CD4-positive, alpha-beta T cell (primary cell): ENCODE measurements at regions of chr22 and their contacts with region 1.

Region 1: GRCh38 chr22:20016734-20017621 is at the start of gene ARVCF:
- DNase-seq: peak; percentile 86 to 96 (median 90)
- ATAC-seq: peak; percentile 68
- H3K4me3 ChIP-seq: peak within 1 kb of the TSS; percentile 88
- H3K4me3 Mint-ChIP-seq: peak within 1 kb of the TSS; percentile 92
- H3K27ac ChIP-seq: no peak within 1 kb of the TSS
- H3K27ac Mint-ChIP-seq: peak within 1 kb of the TSS; percentile 73
- H3K4me1 ChIP-seq: peaks cover 35% of the 10 kb centered on the region
- H3K4me1 Mint-ChIP-seq: peaks cover 26% of the 10 kb centered on the region
- H3K27me3 ChIP-seq: peaks cover 0 to 3% of the 10 kb centered on the region in 2 experiments
- H3K27me3 Mint-ChIP-seq: peaks cover 4% of the 10 kb centered on the region
- CTCF ChIP-seq: peak; percentile 6
- total RNA-seq, gene ARVCF: 2.2 to 2.5 TPM

Region 2: DNA sequence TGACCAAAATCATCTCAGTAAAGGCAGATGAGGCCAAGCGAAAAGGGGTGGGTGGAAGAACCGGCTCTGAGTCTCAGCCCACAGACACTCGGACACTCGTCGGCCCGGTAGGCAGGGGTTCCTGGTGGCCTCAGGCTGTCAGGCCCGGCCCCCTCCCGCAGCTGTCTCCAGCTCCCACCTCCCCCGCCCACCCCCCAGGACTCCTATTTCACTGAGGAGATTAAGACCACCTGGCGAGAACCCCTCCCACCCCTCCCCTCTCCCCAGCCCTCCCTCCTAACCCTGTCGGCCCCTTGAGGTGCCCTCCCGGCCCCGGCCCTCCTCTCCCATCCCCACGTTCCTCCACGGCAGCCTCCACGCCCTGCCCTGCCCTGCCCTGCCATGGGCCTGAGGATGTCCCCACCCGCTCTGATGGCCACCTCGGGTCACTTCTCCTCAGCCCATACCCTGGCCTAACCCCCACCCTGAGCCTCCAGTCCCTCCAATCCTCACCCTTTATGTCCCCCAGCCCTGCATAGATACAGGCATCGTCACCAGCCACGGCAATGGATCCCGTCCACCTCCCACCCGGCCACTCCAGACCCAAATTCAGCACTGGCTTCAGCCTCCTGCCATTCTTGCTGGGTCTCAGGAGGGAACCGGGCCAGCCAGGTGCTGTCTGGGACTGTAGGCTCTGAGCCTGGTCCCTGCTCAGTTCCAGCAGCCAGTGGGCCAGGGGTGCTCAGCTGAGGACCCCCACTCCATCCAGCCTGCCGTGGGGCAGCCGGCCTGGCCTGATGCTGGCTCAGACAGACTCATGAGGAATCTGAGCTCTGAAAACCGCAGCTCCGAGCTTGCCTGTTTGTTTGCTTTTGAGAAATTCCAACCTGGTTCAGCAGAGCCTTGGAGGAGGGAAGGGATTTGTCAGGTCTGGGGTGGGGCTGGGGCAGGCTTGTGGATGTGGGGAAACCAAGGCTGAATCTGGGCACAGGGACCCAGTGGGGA is 266.2 kb before region 1 on chr22:
- CTCF ChIA-PET with region 1: no interaction called
- POLR2A ChIA-PET with region 1: no interaction called
- intact Hi-C with region 1: no loop called
- DNase-seq: no peak
- ATAC-seq: no peak
- H3K4me3 ChIP-seq: no peak overlapping the region
- H3K4me3 Mint-ChIP-seq: no peak overlapping the region
- H3K27ac ChIP-seq: no peak overlapping the region
- H3K27ac Mint-ChIP-seq: no peak overlapping the region
- H3K4me1 ChIP-seq: peaks cover 10% of the 10 kb centered on the region
- H3K4me1 Mint-ChIP-seq: peaks cover 3% of the 10 kb centered on the region
- H3K27me3 ChIP-seq: peaks cover 16 to 28% of the 10 kb centered on the region in 2 experiments
- H3K27me3 Mint-ChIP-seq: peaks cover 29% of the 10 kb centered on the region
- CTCF ChIP-seq: no peak

Region 3: GRCh38 chr22:19854778-19855503 is 162.0 kb before region 1 on chr22 and contains the starts of genes GNB1L and RTL10:
- CTCF ChIA-PET with region 1: no interaction called
- POLR2A ChIA-PET with region 1: no interaction called
- intact Hi-C with region 1: loop called in 1 of 2 experiments (anchors 10 kb)
- DNase-seq: peak; percentile 92 to 99 (median 96)
- ATAC-seq: peak; percentile 89
- H3K4me3 ChIP-seq: peak within 1 kb of the TSS; percentile 99
- H3K4me3 Mint-ChIP-seq: peak within 1 kb of the TSS; percentile 95
- H3K27ac ChIP-seq: peak within 1 kb of the TSS; percentile 78 to 90
- H3K27ac Mint-ChIP-seq: peak within 1 kb of the TSS; percentile 96
- H3K4me1 ChIP-seq: peaks cover 58% of the 10 kb centered on the region
- H3K4me1 Mint-ChIP-seq: peaks cover 71% of the 10 kb centered on the region
- H3K27me3 ChIP-seq: no peaks in the 10 kb centered on the region
- H3K27me3 Mint-ChIP-seq: no peaks in the 10 kb centered on the region
- CTCF ChIP-seq: no peak
- total RNA-seq, gene GNB1L: 3.0 to 6.5 TPM
- total RNA-seq, gene RTL10: 24.7 TPM

Region 4: DNA sequence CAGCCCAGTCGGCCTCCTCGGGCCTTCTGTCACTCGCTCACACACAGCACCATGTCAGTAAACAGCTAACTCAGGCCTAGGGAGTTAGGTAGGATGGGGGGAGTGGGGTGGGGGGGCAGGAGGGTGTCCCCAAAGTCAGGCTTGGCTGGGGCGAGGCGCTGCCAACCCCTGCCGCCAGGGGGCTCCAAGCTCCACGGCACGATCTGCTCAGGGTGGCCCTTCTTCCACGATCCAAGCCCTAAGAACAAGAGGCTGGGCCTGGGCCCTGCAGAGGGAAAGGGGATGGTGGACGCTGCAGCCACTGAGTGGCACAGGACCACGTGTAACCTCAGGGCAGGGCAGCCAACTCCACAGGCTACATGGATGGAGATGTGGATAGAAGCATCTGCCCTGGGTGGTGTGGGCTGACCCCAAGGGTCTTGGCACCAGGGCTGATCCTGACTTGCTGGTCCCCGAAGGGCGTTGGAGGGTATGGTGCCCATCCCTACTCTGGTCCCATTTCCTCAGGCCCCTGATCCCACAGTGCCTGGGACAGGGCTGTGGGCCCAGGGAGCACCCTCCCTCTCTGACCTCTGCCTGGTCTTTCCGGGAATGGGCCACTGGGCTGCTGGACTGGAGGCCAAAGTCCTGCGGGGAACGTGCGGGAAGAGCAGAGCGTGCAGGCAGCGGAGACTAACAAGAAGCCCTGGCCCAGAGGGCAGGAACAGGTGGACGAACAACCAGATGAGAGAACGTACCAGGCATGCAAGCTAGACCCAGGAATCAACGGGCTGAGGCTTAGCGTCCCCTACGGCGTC is 46.3 kb before region 1 on chr22:
- CTCF ChIA-PET with region 1: interaction called, 5 read pairs
- POLR2A ChIA-PET with region 1: interaction called, 4 read pairs
- intact Hi-C with region 1: loop called in 1 of 2 experiments (anchors 1 kb)
- DNase-seq: peak; percentile 59 to 85 (median 76)
- ATAC-seq: peak; percentile 87
- H3K4me3 ChIP-seq: no peak overlapping the region
- H3K4me3 Mint-ChIP-seq: no peak overlapping the region
- H3K27ac ChIP-seq: no peak overlapping the region
- H3K27ac Mint-ChIP-seq: no peak overlapping the region
- H3K4me1 ChIP-seq: peaks cover 18% of the 10 kb centered on the region
- H3K4me1 Mint-ChIP-seq: peaks cover 16% of the 10 kb centered on the region
- H3K27me3 ChIP-seq: no peaks in the 10 kb centered on the region
- H3K27me3 Mint-ChIP-seq: no peaks in the 10 kb centered on the region
- CTCF ChIP-seq: peak; percentile 90

Region 5: DNA sequence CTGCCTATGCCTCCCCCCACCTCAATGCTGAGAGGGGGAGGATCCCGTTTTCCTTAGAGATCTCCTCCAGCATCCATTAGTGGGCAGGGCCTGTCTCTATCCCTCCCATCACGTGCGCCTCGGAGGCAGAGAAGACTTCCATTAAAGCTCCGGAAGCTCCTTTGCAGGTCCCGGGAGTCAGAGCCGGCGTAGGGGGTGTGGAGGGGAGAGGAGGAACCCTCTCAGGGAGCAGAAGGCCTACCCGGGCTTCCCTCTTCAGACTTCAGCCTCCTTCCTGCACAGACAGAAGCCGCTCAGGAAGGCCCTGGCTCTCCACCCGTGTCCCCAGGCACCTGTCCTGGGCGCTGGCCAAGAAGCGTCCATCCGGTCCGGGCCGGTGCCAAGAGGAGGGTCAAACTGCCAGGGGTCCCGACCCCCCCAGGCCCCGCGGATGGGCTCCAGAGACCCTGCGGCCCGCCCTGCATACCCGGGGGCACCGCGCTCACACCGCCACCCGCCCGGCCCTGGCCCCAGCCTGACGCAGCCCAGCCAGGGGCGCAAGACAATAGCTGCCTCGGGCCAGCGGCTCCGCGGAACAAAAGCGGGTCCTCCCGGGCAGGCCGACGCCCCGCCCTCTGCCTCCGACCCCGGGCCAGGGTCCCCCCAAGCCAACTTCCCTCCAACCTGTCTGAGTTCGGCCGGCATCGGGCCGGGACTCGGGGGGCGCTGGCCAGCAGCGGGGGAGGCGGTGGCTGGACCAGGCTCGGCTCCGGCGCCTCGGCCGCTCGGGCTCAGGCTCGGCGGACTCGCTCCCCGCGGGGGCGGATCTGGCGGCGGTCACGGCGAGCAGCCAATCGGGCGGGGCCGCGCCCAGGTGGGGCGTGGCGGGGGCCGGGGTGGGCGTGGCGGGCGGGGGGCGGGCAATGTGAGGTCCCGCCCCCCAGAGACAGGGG is 30.3 kb before region 1 on chr22:
- CTCF ChIA-PET with region 1: no interaction called
- POLR2A ChIA-PET with region 1: interaction called, 3 read pairs
- intact Hi-C with region 1: loop called in 1 of 2 experiments (anchors 2 kb)
- DNase-seq: peak; percentile 31 to 82 (median 53)
- ATAC-seq: peak; percentile 81
- H3K4me3 ChIP-seq: peak overlapping the region; percentile 41
- H3K4me3 Mint-ChIP-seq: peak overlapping the region; percentile 68
- H3K27ac ChIP-seq: no peak overlapping the region
- H3K27ac Mint-ChIP-seq: no peak overlapping the region
- H3K4me1 ChIP-seq: peaks cover 15% of the 10 kb centered on the region
- H3K4me1 Mint-ChIP-seq: no peaks in the 10 kb centered on the region
- H3K27me3 ChIP-seq: peaks cover 0 to 2% of the 10 kb centered on the region in 2 experiments
- H3K27me3 Mint-ChIP-seq: no peaks in the 10 kb centered on the region
- CTCF ChIP-seq: no peak

Region 6: DNA sequence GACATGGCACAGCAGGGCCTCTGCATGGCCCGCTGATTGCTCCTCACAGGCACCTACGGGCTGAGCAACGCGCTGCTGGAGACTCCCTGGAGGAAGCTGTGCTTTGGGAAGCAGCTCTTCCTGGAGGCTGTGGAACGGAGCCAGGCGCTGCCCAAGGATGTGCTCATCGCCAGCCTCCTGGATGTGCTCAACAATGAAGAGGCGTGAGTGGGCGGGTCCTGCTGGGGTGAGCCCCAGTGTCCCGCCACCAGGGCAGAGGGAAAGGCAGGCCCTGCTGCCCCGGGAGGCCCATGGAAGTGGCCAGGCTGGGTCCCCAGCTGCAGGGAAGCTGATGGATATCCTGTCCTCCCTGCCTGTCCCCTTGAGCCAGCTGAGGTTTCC is 44.5 kb after region 1 on chr22:
- CTCF ChIA-PET with region 1: no interaction called
- POLR2A ChIA-PET with region 1: no interaction called
- intact Hi-C with region 1: no loop called
- DNase-seq: no peak
- ATAC-seq: no peak
- H3K4me3 ChIP-seq: no peak overlapping the region
- H3K4me3 Mint-ChIP-seq: no peak overlapping the region
- H3K27ac ChIP-seq: no peak overlapping the region
- H3K27ac Mint-ChIP-seq: no peak overlapping the region
- H3K4me1 ChIP-seq: no peaks in the 10 kb centered on the region
- H3K4me1 Mint-ChIP-seq: no peaks in the 10 kb centered on the region
- H3K27me3 ChIP-seq: no peaks in the 10 kb centered on the region
- H3K27me3 Mint-ChIP-seq: no peaks in the 10 kb centered on the region
- CTCF ChIP-seq: no peak

Region 7: DNA sequence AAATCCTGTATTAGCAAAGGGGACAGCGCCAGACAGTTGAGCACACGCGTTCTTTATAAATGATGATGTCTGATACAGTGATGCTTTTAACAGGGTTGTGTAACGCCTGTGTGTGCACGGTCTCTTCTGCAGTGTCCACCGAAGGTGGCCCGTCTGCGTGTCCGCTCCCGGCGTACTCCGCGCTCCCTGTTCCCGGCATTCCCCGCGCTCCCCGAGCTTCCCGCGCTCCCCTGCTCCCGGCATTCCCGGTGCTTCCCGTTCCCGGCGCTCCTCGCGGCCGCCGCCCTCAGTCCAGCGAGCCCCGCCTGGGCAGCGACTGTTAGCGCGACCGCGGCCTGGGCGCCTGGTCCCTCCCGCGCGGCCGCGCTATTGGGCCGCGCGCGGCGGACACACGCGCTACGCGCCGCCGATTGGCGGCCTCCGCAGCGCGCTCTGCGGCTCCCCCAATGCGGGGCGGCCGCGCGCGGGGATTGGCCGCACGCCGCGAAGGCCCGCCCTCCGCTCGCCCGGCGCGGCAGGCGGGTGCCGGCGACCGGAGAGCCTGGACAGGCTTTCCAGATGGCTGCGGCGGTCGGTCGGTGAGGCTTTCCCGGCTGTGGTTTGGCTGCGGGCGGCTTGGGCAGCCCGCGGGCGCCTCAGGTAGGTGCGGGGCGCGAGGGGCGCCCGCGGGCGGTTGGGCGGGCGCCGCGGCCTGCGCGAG is 62.9 kb after region 1 on chr22 and contains the start of gene DGCR8:
- CTCF ChIA-PET with region 1: no interaction called
- POLR2A ChIA-PET with region 1: interaction called, 3 read pairs
- intact Hi-C with region 1: loop called (anchors 1 kb)
- DNase-seq: peak; percentile 24 to 92 (median 62)
- ATAC-seq: peak; percentile 89
- H3K4me3 ChIP-seq: peak within 1 kb of the TSS; percentile 76
- H3K4me3 Mint-ChIP-seq: peak within 1 kb of the TSS; percentile 99
- H3K27ac ChIP-seq: peak within 1 kb of the TSS; percentile 52 to 53
- H3K27ac Mint-ChIP-seq: peak within 1 kb of the TSS; percentile 90
- H3K4me1 ChIP-seq: peaks cover 45% of the 10 kb centered on the region
- H3K4me1 Mint-ChIP-seq: peaks cover 44% of the 10 kb centered on the region
- H3K27me3 ChIP-seq: no peaks in the 10 kb centered on the region
- H3K27me3 Mint-ChIP-seq: no peaks in the 10 kb centered on the region
- CTCF ChIP-seq: no peak
- total RNA-seq, gene DGCR8: 17.8 to 18.5 TPM

Region 8: DNA sequence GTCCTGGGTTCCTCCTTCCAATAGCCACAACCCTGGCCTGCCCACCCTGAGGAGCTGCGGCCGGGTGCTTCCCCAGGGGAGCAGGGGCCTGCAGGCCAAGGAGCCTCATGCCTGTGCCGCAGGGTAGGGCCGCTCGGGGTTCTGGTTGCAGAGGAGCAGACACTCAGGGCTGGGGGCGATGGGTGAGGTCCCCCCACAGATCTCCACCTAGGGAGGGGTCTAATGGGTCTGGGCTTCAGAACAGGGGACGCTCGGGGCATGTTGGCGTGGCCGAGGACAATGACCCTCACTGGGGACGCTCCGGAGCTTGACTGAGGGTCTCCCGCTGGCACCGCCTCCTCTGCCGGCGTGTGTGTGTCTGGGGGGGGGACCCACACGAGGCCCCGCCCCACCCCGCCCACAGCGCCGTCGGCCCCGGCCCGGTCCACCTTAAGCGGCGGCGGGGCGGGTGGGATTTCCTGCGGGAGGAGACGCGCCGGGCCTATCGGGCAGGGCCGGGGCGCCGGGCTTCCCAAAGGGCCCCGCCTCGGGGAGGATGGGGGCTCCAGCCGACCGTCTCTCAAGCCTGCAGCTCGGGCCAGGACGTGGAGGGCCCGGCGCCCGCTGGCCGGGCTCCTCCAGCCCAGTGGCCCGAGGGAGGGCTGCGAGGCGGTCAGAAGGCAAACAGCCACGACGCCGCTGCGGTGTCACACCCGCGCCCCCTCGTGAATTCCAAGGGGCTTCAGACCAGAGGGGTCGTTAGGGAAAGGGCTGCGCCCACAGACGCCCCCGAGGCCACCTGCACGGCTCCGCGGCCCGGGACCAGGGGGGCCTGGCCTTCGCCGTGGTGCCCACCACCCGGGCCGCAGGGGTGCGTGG is 114.0 kb after region 1 on chr22:
- CTCF ChIA-PET with region 1: no interaction called
- POLR2A ChIA-PET with region 1: interaction called, 4 read pairs
- intact Hi-C with region 1: loop called in 1 of 2 experiments (anchors 1 kb)
- DNase-seq: peak; percentile 58 to 88 (median 82)
- ATAC-seq: peak; percentile 71
- H3K4me3 ChIP-seq: peak overlapping the region; percentile 70
- H3K4me3 Mint-ChIP-seq: peak overlapping the region; percentile 85
- H3K27ac ChIP-seq: peak overlapping the region; percentile 38 to 75
- H3K27ac Mint-ChIP-seq: peak overlapping the region; percentile 79
- H3K4me1 ChIP-seq: peaks cover 54% of the 10 kb centered on the region
- H3K4me1 Mint-ChIP-seq: peaks cover 28% of the 10 kb centered on the region
- H3K27me3 ChIP-seq: no peaks in the 10 kb centered on the region
- H3K27me3 Mint-ChIP-seq: no peaks in the 10 kb centered on the region
- CTCF ChIP-seq: no peak

Region 9: GRCh38 chr22:20393909-20394691 is 377.1 kb after region 1 on chr22 and contains the start of gene ZNF74:
- CTCF ChIA-PET with region 1: no interaction called
- POLR2A ChIA-PET with region 1: no interaction called
- intact Hi-C with region 1: loop called in 1 of 2 experiments (anchors 10 kb)
- DNase-seq: peak; percentile 70 to 96 (median 83)
- ATAC-seq: peak; percentile 97
- H3K4me3 ChIP-seq: peak within 1 kb of the TSS; percentile 75
- H3K4me3 Mint-ChIP-seq: peak within 1 kb of the TSS; percentile 86
- H3K27ac ChIP-seq: peak within 1 kb of the TSS; percentile 26 to 64
- H3K27ac Mint-ChIP-seq: peak within 1 kb of the TSS; percentile 86
- H3K4me1 ChIP-seq: peaks cover 28% of the 10 kb centered on the region
- H3K4me1 Mint-ChIP-seq: peaks cover 30% of the 10 kb centered on the region
- H3K27me3 ChIP-seq: no peaks in the 10 kb centered on the region
- H3K27me3 Mint-ChIP-seq: no peaks in the 10 kb centered on the region
- CTCF ChIP-seq: no peak
- total RNA-seq, gene ZNF74: 1.7 to 2.3 TPM